H1 (cell line): ENCODE measurements at regions of chr22 and their contacts with region 1.

Region 1: DNA sequence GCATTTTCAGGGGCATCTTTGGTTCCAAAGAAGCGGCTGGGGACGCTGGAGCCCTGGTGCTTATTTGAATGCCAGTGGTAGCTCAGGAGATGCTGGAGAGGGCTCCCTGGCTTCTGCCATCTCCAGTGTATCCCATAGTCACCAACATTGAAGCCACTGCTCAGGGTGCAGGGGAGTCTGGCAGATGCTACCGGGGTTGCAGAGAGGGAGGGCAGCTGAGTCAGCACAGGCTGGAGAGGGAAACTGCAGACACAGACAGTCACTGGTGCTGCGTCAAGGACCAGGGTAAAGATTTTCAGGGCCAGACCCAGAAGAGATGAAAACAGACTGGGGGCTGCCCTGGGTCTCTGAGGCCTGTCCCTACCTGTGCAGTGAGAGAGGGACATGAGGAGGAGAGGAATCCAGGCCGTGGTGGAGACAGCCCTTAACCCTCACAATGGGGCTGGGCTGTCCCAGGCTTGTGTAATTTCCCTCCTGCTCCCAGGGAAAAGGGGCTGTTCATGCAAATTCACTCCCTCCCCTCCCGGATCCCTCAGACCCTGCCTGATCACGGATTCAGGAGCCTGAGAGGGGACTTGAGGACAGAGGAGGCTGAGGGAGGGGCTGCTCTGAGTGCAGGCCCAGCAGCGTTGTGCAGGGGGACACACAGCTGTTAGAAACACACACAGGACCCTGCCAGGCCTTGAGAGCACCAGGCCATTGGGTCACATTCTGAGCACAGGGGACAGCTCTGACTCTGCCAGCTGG is 126.9 kb upstream of the GRK3 start:
- DNase-seq: peak in 1 of 2 experiments; percentile 56
- H3K4me3 ChIP-seq: no peak overlapping the region
- H3K27ac ChIP-seq: no peak overlapping the region
- H3K4me1 ChIP-seq: peaks cover 0 to 11% (median 9%) of the 10 kb centered on the region in 4 experiments; a peak in 4 of 7 replicates
- H3K27me3 ChIP-seq: no peaks in the 10 kb centered on the region
- CTCF ChIP-seq: no peak
- EP300 ChIP-seq: peak in 1 of 2 experiments; percentile 80; a peak in 1 of 3 replicates
- POLR2A ChIP-seq: no peak
- RAD21 ChIP-seq: no peak

Region 2: DNA sequence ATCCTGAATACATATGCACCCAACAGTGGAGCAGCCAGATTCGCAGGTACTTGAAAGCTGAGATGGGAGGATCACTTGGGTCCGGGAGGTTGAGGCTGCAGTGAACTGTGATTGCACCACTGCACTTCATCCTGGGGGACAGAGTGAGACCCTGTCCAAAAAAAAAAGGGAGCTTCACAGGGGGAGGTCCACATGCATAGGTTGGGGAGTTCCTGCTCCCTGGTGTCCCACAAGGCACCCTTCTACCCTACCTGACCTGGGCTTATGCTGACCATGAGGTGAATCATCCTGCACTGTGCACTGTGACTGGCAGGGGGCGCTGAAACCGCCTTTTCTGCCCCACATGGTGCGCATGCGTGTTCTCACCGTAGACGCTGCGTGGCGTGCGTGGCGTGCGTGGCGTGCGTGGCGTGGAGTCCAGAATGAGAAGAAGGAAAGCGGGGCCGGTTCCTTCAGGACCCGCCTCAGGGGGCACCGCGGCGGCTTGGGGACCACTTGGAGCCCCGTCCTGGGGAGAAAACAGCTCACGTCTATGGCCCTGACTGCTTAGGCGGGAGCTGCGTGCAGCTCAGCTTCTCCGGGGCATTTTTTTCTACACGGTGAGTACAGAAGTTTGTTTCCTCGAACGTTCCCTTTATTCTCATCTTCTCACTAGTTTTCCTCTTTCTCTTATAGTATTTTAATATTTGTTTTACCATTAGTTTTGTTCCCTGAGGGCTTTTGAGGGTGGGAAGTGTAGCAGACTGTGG is 10.3 kb after region 1 on chr22:
- CTCF ChIA-PET with region 1: interaction called, 10 read pairs
- POLR2A ChIA-PET with region 1: interaction called, 4 read pairs
- DNase-seq: peak; percentile 53 to 97
- H3K4me3 ChIP-seq: peak overlapping the region; percentile 58 to 92 (median 76)
- H3K27ac ChIP-seq: no peak overlapping the region
- H3K4me1 ChIP-seq: peaks cover 0 to 5% (median 0%) of the 10 kb centered on the region in 4 experiments; a peak in 3 of 7 replicates
- H3K27me3 ChIP-seq: no peaks in the 10 kb centered on the region
- CTCF ChIP-seq: peak; percentile 83 to 99 (median 98)
- EP300 ChIP-seq: no peak
- POLR2A ChIP-seq: peak in 1 of 2 experiments; percentile 64; a peak in 2 of 3 replicates
- RAD21 ChIP-seq: peak; percentile 42 to 57

Region 3: GRCh38 chr22:25582946-25583345 is 145.4 kb after region 1 on chr22:
- CTCF ChIA-PET with region 1: no interaction called
- POLR2A ChIA-PET with region 1: no interaction called
- DNase-seq: no peak
- H3K4me3 ChIP-seq: no peak overlapping the region
- H3K27ac ChIP-seq: no peak overlapping the region
- H3K4me1 ChIP-seq: no peaks in the 10 kb centered on the region
- H3K27me3 ChIP-seq: no peaks in the 10 kb centered on the region
- CTCF ChIP-seq: no peak
- EP300 ChIP-seq: no peak
- POLR2A ChIP-seq: no peak
- RAD21 ChIP-seq: no peak